Right cardiac atrium (tissue), 5 donors: ENCODE measurements at regions of chr12 and their contacts with region 1.

Region 1: GRCh38 chr12:101773650-101774162 is 34.4 kb upstream of the SYCP3 start:
- DNase-seq: peak; percentile 47 to 72 (median 59)
- ATAC-seq: peak; percentile 71 to 79
- H3K4me3 ChIP-seq: no peak overlapping the region
- H3K27ac ChIP-seq: no peak overlapping the region
- H3K4me1 ChIP-seq: peaks cover 6% of the 10 kb centered on the region
- H3K27me3 ChIP-seq: no peaks in the 10 kb centered on the region

Region 2: GRCh38 chr12:101004898-101005297 is 768.8 kb before region 1 on chr12:
- intact Hi-C with region 1: no loop called
- DNase-seq: no peak
- ATAC-seq: no peak
- H3K4me3 ChIP-seq: no peak overlapping the region
- H3K27ac ChIP-seq: no peak overlapping the region
- H3K4me1 ChIP-seq: no peaks in the 10 kb centered on the region
- H3K27me3 ChIP-seq: no peaks in the 10 kb centered on the region

Region 3: DNA sequence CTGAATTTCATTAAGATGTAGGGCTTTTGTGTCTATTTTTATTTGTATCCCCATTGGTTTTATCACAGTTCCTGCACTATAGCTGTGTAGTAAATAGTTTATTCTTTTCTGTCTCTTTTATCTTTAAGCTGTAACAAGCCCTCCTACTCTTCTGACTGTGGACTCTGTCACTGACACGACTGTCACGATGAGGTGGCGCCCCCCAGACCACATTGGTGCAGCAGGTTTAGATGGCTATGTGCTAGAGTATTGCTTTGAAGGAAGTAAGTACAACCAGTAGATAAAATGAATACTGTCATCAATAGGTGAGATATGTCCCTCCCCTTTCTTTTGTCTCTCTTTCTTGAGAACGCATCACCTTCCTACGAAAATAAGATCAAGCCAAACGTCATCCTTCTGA is 110.4 kb before region 1 on chr12:
- intact Hi-C with region 1: no loop called
- DNase-seq: no peak
- ATAC-seq: no peak
- H3K4me3 ChIP-seq: no peak overlapping the region
- H3K27ac ChIP-seq: no peak overlapping the region
- H3K4me1 ChIP-seq: no peaks in the 10 kb centered on the region
- H3K27me3 ChIP-seq: no peaks in the 10 kb centered on the region

Region 4: GRCh38 chr12:101738920-101739665 is 34.6 kb before region 1 on chr12 and contains the start of gene SYCP3:
- intact Hi-C with region 1: no loop called
- DNase-seq: peak in 1 of 3 donors; percentile 53
- ATAC-seq: peak; percentile 57 to 59
- H3K4me3 ChIP-seq: no peak within 1 kb of the TSS
- H3K27ac ChIP-seq: no peak within 1 kb of the TSS
- H3K4me1 ChIP-seq: no peaks in the 10 kb centered on the region
- H3K27me3 ChIP-seq: no peaks in the 10 kb centered on the region
- total RNA-seq, gene SYCP3: 0.18 TPM in 1 of 4 donors, not detected in the others

Region 5: GRCh38 chr12:101839324-101840283 is 65.9 kb after region 1 on chr12:
- intact Hi-C with region 1: loop called in 3 of 4 experiments (anchors 5 kb)
- DNase-seq: peak in 2 of 3 donors; percentile 40 to 70
- ATAC-seq: peak; percentile 63 to 76
- H3K4me3 ChIP-seq: no peak overlapping the region
- H3K27ac ChIP-seq: no peak overlapping the region
- H3K4me1 ChIP-seq: no peaks in the 10 kb centered on the region
- H3K27me3 ChIP-seq: no peaks in the 10 kb centered on the region

Region 6: DNA sequence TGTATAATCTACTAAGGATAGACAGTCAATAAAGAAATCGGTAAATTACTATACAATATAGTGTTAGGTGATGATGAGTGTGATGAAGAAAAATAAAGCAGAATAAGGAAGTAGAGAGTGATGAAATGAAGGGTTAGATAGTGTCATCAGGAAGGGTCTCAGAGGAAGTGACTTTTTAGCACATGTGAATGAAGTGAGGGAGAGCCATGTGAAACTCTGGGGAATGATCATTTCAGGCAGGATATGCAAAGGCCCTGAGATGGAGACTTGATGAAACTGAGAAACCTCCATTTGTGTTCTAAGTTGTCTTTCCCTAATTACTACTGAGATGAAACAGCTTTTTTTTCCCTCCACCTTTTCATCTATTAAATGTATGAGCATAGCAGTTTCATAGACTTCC is 76.5 kb after region 1 on chr12:
- intact Hi-C with region 1: no loop called
- DNase-seq: no peak
- ATAC-seq: no peak
- H3K4me3 ChIP-seq: no peak overlapping the region
- H3K27ac ChIP-seq: no peak overlapping the region
- H3K4me1 ChIP-seq: no peaks in the 10 kb centered on the region
- H3K27me3 ChIP-seq: no peaks in the 10 kb centered on the region